Calu3 (cell line): ENCODE measurements at regions of chr1 and their contacts with region 1.

Region 1: DNA sequence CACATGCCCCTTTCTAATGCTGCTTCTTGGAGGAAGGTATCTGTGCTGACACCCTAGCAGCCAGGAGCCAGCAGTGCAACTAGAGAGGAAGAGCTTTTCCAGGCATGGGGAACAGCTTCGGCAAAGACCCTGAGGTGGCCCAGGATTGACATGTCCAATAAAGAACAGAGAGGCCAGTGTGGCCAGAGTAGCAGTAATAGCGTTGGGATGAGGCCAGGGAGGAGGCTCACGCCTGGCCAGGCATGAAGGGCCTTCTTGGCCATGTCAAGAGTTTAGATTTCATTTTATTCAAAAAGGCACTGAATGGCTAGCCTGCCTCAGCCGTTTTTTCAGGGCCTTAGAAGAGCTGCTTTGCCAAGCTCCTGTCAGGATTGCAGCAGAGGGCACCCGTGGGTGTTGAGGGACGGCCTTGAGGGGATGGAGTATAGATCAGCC is 16.3 kb upstream of the ADAMTSL4 start:
- DNase-seq: no peak
- H3K4me3 Mint-ChIP-seq: peak overlapping the region; percentile 55
- H3K27ac Mint-ChIP-seq: peak overlapping the region; percentile 92
- H3K4me1 Mint-ChIP-seq: peaks cover 69% of the 10 kb centered on the region
- H3K27me3 Mint-ChIP-seq: no peaks in the 10 kb centered on the region
- CTCF ChIP-seq: no peak

Region 2: GRCh38 chr1:150464422-150464826 is 68.5 kb before region 1 on chr1:
- CTCF ChIA-PET with region 1: no interaction called
- intact Hi-C with region 1: loop called (anchors 1 kb)
- DNase-seq: peak; percentile 77
- H3K4me3 Mint-ChIP-seq: no peak overlapping the region
- H3K27ac Mint-ChIP-seq: no peak overlapping the region
- H3K4me1 Mint-ChIP-seq: peaks cover 8% of the 10 kb centered on the region
- H3K27me3 Mint-ChIP-seq: no peaks in the 10 kb centered on the region
- CTCF ChIP-seq: peak; percentile 70

Region 3: GRCh38 chr1:150486964-150487762 is 45.7 kb before region 1 on chr1 and contains the start of gene TARS2:
- CTCF ChIA-PET with region 1: interaction called, 5 read pairs
- intact Hi-C with region 1: loop called (anchors 1 kb)
- DNase-seq: peak; percentile 98
- H3K4me3 Mint-ChIP-seq: peak within 1 kb of the TSS; percentile 88
- H3K27ac Mint-ChIP-seq: peak within 1 kb of the TSS; percentile 87
- H3K4me1 Mint-ChIP-seq: peaks cover 10% of the 10 kb centered on the region
- H3K27me3 Mint-ChIP-seq: no peaks in the 10 kb centered on the region
- CTCF ChIP-seq: peak; percentile 48
- total RNA-seq, gene TARS2: 42.2 and 51.7 TPM in 2 replicates

Region 4: GRCh38 chr1:150515328-150516048 is 17.4 kb before region 1 on chr1 and contains the start of gene FALEC:
- CTCF ChIA-PET with region 1: interaction called, 24 read pairs
- intact Hi-C with region 1: no loop called
- DNase-seq: peak; percentile 98
- H3K4me3 Mint-ChIP-seq: peak within 1 kb of the TSS; percentile 73
- H3K27ac Mint-ChIP-seq: peak within 1 kb of the TSS; percentile 1
- H3K4me1 Mint-ChIP-seq: peaks cover 12% of the 10 kb centered on the region
- H3K27me3 Mint-ChIP-seq: no peaks in the 10 kb centered on the region
- CTCF ChIP-seq: no peak
- total RNA-seq, gene FALEC: 0.71 TPM in 1 of 2 replicates, not detected in the other